ENCODE measurements at regions of chr7 and their contacts with region 1.

Region 1: GRCh38 chr7:33109005-33109757 is at the start of gene RP9:
- DNase-seq: peak; percentile 89
- CTCF ChIP-seq: peak; percentile 80

Region 2: GRCh38 chr7:32803406-32804141 is 305.6 kb before region 1 on chr7:
- CTCF ChIA-PET with region 1: interaction called, 57 read pairs
- POLR2A ChIA-PET with region 1: no interaction called
- DNase-seq: no peak
- CTCF ChIP-seq: no peak

Region 3: DNA sequence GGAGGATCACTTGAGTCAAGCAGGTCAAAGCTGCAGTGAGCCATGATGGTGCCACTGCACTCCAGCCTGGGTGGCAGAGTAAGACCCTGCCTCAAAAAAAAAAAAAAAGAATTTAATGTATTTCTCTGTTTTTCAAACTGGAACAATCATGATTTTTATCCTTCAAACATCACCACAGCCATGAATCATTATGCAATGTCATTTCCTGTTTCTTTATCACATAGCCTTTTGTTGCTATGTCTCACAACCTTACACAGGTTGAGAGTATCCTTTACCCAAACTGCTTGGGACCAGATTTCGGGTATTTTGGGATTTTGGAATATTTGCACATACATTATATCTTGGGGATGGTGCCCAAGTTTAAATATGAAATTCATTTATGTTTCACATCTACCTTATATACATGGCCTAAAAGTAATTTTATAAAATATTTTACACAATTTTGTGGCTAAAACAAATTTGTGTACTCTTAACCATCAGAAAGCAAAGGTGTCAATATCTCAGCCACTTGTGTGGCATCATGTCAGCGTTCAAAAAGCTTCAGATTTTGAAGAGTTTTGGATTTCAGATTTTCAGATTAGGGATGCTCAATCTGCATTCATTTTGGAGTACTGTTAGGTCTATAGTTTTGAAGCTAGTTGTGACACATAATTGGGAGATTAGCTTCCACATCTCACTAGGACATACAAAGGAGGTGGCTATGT is 54.8 kb before region 1 on chr7:
- CTCF ChIA-PET with region 1: interaction called, 19 read pairs
- POLR2A ChIA-PET with region 1: no interaction called
- DNase-seq: no peak
- CTCF ChIP-seq: no peak

Region 4: GRCh38 chr7:33072471-33072870 is 36.7 kb before region 1 on chr7:
- CTCF ChIA-PET with region 1: interaction called, 10 read pairs
- POLR2A ChIA-PET with region 1: no interaction called
- DNase-seq: no peak
- CTCF ChIP-seq: no peak

Region 5: DNA sequence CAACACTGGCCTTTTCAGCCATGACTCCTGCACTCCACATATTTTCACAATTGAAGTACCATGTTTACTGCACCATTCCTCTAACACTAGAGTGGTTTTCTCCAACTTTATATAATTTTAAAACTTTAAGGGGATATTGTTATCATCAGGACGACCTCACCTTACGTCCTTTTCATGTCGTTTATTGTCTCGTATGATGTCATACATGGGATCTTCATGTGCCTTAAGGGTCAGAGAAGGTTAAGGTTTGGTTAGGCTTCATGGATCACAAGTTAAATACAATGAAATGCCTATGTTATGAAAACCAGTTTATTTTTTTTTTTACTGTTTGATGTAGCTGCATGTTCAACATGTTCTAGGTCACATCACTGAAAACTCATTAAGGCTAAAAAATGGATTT is 12.8 kb before region 1 on chr7:
- CTCF ChIA-PET with region 1: interaction called, 18 read pairs
- POLR2A ChIA-PET with region 1: no interaction called
- DNase-seq: no peak
- CTCF ChIP-seq: no peak

Region 6: DNA sequence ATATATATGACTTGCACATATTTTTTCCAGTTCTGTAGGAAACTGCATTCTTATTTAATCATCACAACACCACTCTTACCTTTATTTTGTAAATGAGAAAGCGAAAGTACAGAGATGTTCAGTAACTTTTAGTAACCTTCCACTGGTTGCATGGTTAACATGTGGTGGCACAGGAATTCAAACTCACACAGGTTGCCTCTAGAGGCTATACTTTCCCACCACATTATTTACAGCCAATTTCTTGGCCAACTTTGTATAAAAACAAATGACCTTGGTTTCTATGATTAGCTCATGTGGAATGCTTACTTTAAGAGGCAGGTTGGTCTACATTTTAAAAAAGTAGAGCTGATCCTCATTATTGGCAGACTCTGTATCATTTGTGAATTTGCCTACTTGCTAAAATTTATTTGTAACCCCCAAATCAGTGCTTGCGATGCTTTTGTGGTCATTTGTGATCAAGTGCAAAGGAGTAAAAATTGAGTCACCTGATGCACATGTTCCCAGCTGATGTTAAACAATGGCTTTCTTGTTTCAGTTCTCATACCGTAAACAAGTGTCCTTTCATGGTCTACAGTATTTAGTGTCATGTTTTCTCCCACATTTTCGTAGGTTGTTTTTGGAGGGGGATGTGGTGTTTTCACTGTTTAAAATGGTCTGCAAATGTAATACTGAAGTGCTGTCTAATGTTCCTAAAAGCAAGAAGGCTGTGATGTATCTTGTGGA is 35.0 kb after region 1 on chr7:
- CTCF ChIA-PET with region 1: no interaction called
- POLR2A ChIA-PET with region 1: no interaction called
- DNase-seq: no peak
- CTCF ChIP-seq: no peak